ENCODE measurements at regions of chr9 and their contacts with region 1.

Region 1: GRCh38 chr9:17531642-17532254 is 47.1 kb upstream of the SH3GL2 start:
- DNase-seq: peak; percentile 58
- H3K4me3 Mint-ChIP-seq: peak overlapping the region; percentile 26
- H3K27ac Mint-ChIP-seq: no peak overlapping the region
- H3K4me1 Mint-ChIP-seq: no peaks in the 10 kb centered on the region
- H3K27me3 Mint-ChIP-seq: peaks cover 41% of the 10 kb centered on the region
- CTCF ChIP-seq: peak; percentile 52

Region 2: GRCh38 chr9:17476401-17476800 is 55.3 kb before region 1 on chr9:
- CTCF ChIA-PET with region 1: no interaction called
- intact Hi-C with region 1: no loop called
- DNase-seq: no peak
- H3K4me3 Mint-ChIP-seq: no peak overlapping the region
- H3K27ac Mint-ChIP-seq: no peak overlapping the region
- H3K4me1 Mint-ChIP-seq: no peaks in the 10 kb centered on the region
- H3K27me3 Mint-ChIP-seq: no peaks in the 10 kb centered on the region
- CTCF ChIP-seq: no peak

Region 3: DNA sequence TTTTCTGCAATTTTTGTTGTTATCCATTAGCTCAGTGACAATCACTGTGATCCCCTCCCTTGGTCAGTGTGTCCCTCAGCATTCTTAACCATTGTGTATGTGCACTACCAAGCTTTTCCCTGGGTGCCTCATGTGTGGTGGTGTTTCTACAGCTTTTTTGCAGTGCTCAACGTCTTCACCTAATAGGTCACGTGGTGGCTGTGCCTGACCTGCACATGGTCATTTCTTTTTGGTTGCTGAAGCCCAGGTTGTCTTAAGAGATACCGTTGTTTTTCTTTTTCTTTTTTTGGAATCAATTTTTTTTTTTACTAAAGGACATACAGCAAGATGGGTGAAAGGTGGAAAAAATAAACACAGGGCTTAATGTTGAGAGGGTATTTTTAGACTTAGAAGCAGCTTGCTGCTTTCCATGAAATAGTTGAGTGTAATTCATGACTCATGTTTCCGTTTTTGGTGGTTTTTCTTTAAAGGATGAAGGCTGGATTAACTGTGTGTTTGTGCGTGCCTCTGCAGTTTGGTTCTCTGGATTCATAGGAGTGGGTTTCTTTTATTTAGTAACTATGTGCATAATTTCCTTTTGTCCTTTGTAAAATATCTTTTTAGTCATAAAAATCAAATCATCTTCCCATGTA is 69.3 kb after region 1 on chr9:
- CTCF ChIA-PET with region 1: no interaction called
- intact Hi-C with region 1: no loop called
- DNase-seq: no peak
- H3K4me3 Mint-ChIP-seq: no peak overlapping the region
- H3K27ac Mint-ChIP-seq: no peak overlapping the region
- H3K4me1 Mint-ChIP-seq: peaks cover 8% of the 10 kb centered on the region
- H3K27me3 Mint-ChIP-seq: peaks cover 36% of the 10 kb centered on the region
- CTCF ChIP-seq: no peak

Region 4: DNA sequence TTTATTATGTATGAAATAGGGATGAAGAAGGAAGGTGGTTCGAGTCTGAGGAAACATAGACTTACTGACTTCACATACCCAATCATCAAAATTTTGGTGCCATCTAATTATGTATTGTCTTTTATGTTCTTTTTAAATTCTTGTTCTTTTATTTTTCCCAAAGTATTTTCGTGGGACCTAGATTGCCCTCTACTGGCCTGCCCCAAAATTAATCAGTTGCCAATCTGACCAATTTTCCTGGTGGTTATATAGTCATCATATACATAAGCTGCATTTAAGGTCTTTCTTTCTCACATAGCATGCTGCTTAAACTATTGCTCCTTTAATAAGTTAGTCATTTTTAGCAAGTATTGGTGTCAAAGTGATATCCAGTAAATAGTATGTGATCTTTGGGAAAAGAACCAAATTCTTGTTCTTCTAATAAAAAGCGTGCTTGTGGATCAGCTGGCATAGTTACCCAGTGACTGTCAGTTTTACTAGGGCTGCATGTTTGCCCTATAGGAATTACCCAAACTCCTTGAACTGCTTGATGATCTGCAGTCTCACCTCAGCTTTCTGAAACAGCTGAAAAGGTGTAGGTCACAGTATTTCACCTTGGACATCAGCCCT is 270.6 kb after region 1 on chr9:
- CTCF ChIA-PET with region 1: no interaction called
- intact Hi-C with region 1: loop called (anchors 1 kb)
- DNase-seq: no peak
- H3K4me3 Mint-ChIP-seq: no peak overlapping the region
- H3K27ac Mint-ChIP-seq: no peak overlapping the region
- H3K4me1 Mint-ChIP-seq: no peaks in the 10 kb centered on the region
- H3K27me3 Mint-ChIP-seq: peaks cover 13% of the 10 kb centered on the region
- CTCF ChIP-seq: no peak

Region 5: DNA sequence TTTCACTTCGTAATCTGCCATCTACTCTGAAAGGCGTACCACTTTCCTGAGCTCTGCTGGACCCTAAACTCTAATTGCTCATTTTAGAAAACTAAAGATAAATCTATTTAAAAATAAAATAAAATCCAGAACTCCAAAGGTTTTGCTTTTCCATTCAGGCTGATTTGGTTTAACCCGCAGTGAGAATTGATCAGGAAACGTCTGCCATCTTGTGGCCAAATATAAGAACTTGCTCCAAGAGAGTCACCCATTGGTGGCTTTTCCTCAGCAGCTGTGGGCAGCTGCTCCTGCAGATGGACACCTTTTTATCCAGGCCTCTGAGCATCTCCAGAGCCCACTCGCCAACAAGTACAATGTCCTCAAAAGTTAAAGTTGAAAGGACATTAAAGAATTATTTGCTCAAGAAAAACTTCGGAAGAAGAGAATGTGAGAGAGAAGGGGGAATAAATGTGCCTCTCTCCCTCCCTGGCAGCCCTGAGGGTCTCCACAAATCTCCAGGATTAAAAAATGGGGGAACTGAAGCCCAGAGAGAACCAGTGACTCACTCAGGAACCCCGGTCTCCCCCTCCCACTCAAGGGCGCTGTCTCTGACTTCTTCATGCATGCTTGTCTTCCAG is 1497.2 kb after region 1 on chr9:
- CTCF ChIA-PET with region 1: no interaction called
- intact Hi-C with region 1: loop called (anchors 5 kb)
- DNase-seq: peak; percentile 42
- H3K4me3 Mint-ChIP-seq: no peak overlapping the region
- H3K27ac Mint-ChIP-seq: no peak overlapping the region
- H3K4me1 Mint-ChIP-seq: no peaks in the 10 kb centered on the region
- H3K27me3 Mint-ChIP-seq: peaks cover 15% of the 10 kb centered on the region
- CTCF ChIP-seq: peak; percentile 40

Measured in Calu3 (cell line).